ENCODE measurements at regions of chr3 and their contacts with region 1.

Region 1: GRCh38 chr3:198061119-198062067 is 101.4 kb downstream of the LMLN start:
- DNase-seq: no peak
- H3K4me3 ChIP-seq: no peak overlapping the region
- H3K27ac ChIP-seq: no peak overlapping the region
- H3K4me1 ChIP-seq: no peaks in the 10 kb centered on the region
- H3K27me3 ChIP-seq: no peaks in the 10 kb centered on the region; a peak in 1 of 7 replicates
- CTCF ChIP-seq: no peak
- EP300 ChIP-seq: no peak
- POLR2A ChIP-seq: no peak
- RAD21 ChIP-seq: no peak

Region 2: DNA sequence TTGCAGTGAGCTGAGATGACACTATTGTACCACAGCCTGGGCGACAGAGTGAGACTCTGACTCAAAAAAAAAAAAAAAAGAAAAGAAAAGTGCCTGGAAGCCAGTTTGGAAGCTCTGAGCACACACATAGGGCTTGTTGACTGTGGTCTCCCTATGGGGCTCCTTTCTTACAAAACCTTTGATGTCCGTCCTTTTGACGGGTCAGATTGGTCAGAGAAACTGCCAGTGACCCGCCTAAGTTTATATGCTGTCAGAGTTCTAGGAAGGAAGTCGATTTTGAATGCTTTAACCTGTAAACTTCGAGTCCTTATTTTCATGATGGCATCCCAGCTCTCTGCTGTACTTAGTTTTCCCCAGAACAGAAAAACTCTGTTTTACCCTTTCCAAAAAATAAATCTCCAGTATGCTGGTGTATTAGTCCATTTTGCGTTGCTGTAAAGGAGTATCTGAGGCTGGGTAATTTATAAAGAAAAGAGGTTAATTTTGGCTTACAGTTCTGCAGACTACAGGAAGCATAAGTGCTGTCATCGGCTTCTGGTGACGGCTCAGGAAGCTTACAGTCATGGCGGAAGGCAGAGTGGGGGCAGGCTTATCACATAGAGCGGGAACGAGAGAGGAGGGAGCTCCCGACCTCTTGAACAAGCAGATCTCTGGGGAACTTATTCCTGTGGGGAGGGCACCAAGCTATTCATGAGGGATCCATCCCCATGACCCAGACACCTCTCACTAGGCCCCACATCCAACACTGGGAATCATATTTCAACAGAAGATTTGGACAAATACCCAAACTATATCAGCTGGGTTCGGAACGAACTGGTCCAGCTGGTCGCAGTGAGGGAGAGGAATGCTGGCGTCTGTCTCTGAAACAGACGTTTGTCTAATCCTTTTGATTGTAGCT is 29.1 kb before region 1 on chr3:
- CTCF ChIA-PET with region 1: no interaction called
- POLR2A ChIA-PET with region 1: no interaction called
- DNase-seq: no peak
- H3K4me3 ChIP-seq: no peak overlapping the region
- H3K27ac ChIP-seq: no peak overlapping the region
- H3K4me1 ChIP-seq: no peaks in the 10 kb centered on the region
- H3K27me3 ChIP-seq: no peaks in the 10 kb centered on the region
- CTCF ChIP-seq: no peak
- EP300 ChIP-seq: no peak
- POLR2A ChIP-seq: no peak
- RAD21 ChIP-seq: no peak

Region 3: DNA sequence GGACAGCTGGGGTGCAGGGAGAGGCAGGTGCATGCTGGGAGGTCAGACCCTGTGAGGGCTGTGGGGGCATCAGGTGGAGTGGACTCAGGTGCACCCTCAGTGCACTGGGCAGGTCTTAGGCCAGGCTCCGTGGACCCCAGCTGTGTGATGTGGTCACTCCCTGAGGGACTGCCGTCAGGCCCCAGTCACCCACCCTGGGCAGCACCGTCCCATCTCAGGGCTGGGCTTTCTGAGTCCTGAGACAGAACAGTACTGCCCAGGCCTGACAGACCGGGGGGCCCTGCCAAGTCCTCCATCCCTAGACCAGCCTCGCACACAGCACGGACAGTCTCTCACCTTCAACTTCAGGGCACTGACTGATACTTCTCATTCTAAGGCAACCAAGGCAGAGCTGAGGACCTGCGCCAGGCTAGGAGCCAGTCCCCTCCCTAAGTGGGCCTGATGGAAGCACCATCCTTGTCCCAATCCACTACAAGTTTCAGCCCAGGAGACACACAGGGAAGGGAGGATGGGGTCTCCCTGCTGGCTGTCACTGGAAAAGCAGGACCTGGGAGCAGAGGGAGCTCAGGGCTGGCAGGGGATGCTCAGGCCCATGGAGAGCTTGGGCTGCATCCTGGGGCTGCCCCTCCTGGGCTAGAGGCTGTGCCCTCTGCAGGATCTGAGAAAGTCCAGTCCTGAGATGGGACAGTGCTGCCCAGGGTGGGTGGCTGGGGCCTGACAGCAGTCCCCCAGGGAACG is 15.1 kb before region 1 on chr3:
- CTCF ChIA-PET with region 1: interaction called, 70 read pairs
- POLR2A ChIA-PET with region 1: no interaction called
- DNase-seq: no peak
- H3K4me3 ChIP-seq: no peak overlapping the region
- H3K27ac ChIP-seq: no peak overlapping the region
- H3K4me1 ChIP-seq: no peaks in the 10 kb centered on the region
- H3K27me3 ChIP-seq: no peaks in the 10 kb centered on the region
- CTCF ChIP-seq: peak in 1 of 3 experiments; percentile 30; a peak in 1 of 4 replicates
- EP300 ChIP-seq: no peak
- POLR2A ChIP-seq: no peak
- RAD21 ChIP-seq: 0 out of 4 replicates have a peak, but pooled peaks of 1 of the 2 experiments have one; percentile 9

Region 4: DNA sequence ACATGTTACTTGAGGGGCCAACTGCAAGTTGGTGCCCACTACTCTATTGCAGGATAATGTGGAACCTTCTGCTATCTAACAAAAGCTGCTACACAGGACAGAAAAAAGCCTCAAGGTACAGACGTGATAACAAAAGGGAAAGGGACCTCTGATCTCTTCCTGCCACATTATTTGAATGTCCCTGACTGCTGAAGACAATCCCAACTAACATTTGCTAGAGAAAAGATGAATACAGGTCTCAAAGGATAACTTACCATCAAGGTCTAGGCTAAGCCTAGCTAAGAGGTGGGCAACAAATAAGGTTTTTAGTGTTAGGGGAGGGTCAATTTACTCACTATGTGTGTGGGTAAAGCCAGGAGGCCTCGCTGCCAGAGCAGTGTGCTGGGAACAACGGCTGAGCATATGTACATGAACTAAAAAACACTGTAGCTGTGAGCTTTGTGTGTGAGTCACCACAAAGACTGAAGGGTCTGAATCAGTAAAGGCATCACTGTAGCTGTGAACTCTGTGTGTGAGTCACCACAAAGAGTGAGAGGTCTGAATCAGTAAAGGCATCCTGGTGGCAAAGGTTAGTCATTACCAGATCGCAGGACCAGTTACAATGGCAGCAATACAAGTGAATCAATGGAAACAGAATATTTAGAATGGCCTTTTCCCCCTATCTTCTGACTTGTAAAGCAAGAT is 10.4 kb after region 1 on chr3:
- CTCF ChIA-PET with region 1: interaction called, 10 read pairs
- POLR2A ChIA-PET with region 1: interaction called, 3 read pairs
- DNase-seq: no peak
- H3K4me3 ChIP-seq: no peak overlapping the region
- H3K27ac ChIP-seq: no peak overlapping the region
- H3K4me1 ChIP-seq: peaks cover 0 to 9% (median 2%) of the 10 kb centered on the region in 4 experiments; a peak in 2 of 7 replicates
- H3K27me3 ChIP-seq: peaks cover 0 to 4% (median 0%) of the 10 kb centered on the region in 4 experiments; a peak in 2 of 7 replicates
- CTCF ChIP-seq: peak in 1 of 3 experiments; percentile 60; a peak in 1 of 4 replicates
- EP300 ChIP-seq: no peak
- POLR2A ChIP-seq: no peak
- RAD21 ChIP-seq: peak; percentile 19 to 20; a peak in 2 of 4 replicates

Region 5: GRCh38 chr3:198080521-198081280 is 19.3 kb after region 1 on chr3:
- CTCF ChIA-PET with region 1: interaction called, 12 read pairs
- POLR2A ChIA-PET with region 1: interaction called, 3 read pairs
- DNase-seq: peak; percentile 64 to 91
- H3K4me3 ChIP-seq: peak overlapping the region; percentile 26 to 62 (median 44)
- H3K27ac ChIP-seq: no peak overlapping the region
- H3K4me1 ChIP-seq: peaks cover 0 to 7% (median 1%) of the 10 kb centered on the region in 4 experiments; a peak in 3 of 7 replicates
- H3K27me3 ChIP-seq: peaks cover 15 to 60% (median 33%) of the 10 kb centered on the region in 4 experiments
- CTCF ChIP-seq: peak; percentile 56 to 69 (median 63)
- EP300 ChIP-seq: peak in 1 of 2 experiments; percentile 49; a peak in 1 of 3 replicates
- POLR2A ChIP-seq: no peak
- RAD21 ChIP-seq: peak; percentile 6 to 51; a peak in 1 of 4 replicates

Measured in H1 (cell line).